IMR-90 (cell line): ENCODE measurements at regions of chr17 and their contacts with region 1.

Region 1: GRCh38 chr17:77963441-77963840 is 4.9 kb downstream of the TNRC6C start:
- DNase-seq: peak; percentile 93
- ATAC-seq: peak; percentile 55
- H3K4me3 ChIP-seq: no peak overlapping the region
- H3K27ac ChIP-seq: no peak overlapping the region
- H3K4me1 ChIP-seq: no peaks in the 10 kb centered on the region; the same call in 1 of the 2 replicates
- H3K27me3 ChIP-seq: no peaks in the 10 kb centered on the region
- CTCF ChIP-seq: no peak
- POLR2A ChIP-seq: no peak
- RAD21 ChIP-seq: no peak

Region 2: DNA sequence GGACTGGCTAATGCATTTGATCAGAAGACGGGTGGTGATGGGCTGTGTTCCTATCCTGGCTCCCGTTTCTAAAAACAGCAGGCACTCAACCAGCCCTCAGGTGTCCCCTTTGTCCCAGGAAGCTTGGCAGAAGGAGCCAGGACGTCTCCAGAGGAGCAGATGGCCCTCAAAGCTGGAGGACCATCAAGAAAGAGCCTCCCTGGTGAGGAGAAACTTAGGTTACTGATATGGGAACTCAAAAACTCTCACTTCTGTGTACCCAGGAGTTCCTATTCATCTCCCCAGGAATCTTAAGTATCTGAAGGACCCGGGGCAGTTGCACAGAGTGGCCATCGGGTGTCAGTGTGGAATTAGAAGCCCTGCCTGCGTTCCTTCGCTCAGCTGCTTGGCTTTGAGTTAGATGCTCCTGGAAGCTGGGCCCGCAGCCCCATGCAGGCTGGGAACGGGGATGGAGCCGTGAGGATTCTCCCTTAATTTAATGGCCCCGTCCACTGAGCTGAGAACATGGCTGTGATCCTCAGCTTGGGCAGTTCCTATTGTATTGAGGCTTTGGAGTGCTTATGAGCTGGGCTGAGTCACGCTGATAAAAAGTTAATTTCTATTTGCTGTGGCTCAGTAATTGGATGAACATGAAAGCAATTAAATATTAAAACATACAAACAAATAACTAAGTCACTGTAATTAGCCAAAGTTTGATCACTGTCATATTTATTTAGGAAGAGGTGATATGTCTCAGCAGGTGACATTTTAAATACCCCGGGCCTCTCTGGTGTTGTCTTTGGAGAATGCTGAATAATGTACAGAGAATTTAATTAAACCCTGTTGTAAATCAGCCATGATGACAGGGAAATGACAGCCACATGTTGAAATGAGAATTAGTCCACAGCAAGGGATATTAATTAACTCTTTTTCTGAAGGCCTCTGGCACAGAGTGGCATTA is 420.6 kb before region 1 on chr17:
- CTCF ChIA-PET with region 1: no interaction called
- POLR2A ChIA-PET with region 1: no interaction called
- dilution Hi-C with region 1: no loop called
- in situ Hi-C with region 1: no loop called
- intact Hi-C with region 1: loop called (anchors 5 kb)
- DNase-seq: peak; percentile 78
- ATAC-seq: peak; percentile 99
- H3K4me3 ChIP-seq: no peak overlapping the region
- H3K27ac ChIP-seq: no peak overlapping the region
- H3K4me1 ChIP-seq: no peaks in the 10 kb centered on the region
- H3K27me3 ChIP-seq: peaks cover 44% of the 10 kb centered on the region
- CTCF ChIP-seq: peak; percentile 96
- POLR2A ChIP-seq: no peak
- RAD21 ChIP-seq: peak; percentile 93